Activated CD4-positive, alpha-beta T cell treated with anti-CD3 and anti-CD28 coated beads for 36 hours (primary cell): ENCODE measurements at regions of chr3 and their contacts with region 1.

Region 1: GRCh38 chr3:188788621-188789081 is 383.1 kb upstream of the TPRG1 start:
- DNase-seq: peak; percentile 89
- ATAC-seq: peak; percentile 97
- H3K4me3 Mint-ChIP-seq: no peak overlapping the region
- H3K27ac Mint-ChIP-seq: no peak overlapping the region
- H3K4me1 Mint-ChIP-seq: peaks cover 2% of the 10 kb centered on the region
- H3K27me3 Mint-ChIP-seq: no peaks in the 10 kb centered on the region

Region 2: GRCh38 chr3:187974871-187975271 is 813.8 kb before region 1 on chr3:
- CTCF ChIA-PET with region 1: no interaction called
- POLR2A ChIA-PET with region 1: no interaction called
- intact Hi-C with region 1: loop called (anchors 2 to 5 kb)
- DNase-seq: no peak
- ATAC-seq: peak; percentile 61
- H3K4me3 Mint-ChIP-seq: peak overlapping the region; percentile 57
- H3K27ac Mint-ChIP-seq: peak overlapping the region; percentile 90
- H3K4me1 Mint-ChIP-seq: peaks cover 57% of the 10 kb centered on the region
- H3K27me3 Mint-ChIP-seq: no peaks in the 10 kb centered on the region

Region 3: DNA sequence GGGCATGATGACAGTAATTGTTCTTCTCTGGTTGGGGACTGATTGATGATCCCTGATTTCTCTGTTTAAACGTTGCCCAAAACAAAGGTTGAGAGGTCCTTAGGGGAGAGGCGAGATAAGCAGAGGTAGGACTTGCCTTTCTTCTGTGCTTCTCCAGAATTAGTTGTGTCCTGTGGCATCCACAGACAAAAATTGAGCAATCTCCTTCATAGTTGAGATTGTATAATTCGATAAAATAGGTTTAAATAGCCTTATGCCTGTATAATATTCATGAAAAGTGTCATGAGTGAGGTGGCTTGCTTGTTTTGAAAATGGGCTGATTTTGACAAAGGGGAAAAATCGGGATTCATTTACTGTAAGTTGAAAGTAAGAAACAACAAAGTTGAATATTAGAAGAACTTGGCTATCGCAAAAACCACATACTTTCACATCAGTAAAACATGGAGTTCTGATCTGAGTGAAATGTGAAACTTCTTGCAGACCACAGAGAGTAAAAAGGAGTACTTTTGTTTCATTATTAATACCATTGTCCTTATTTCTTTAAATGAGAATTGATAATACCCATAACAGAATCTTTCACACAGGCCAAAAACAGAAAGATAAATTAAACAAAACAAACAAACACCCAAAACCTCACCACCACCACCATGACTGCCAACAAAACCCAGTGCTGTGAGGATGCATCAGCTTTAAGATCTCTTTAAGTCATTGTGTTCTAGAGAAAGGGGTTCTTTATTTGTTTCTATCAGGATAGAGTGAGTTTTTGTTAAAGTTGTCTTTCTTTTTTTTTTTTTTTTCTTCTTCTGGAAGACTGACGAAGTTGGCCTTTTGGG is 479.0 kb before region 1 on chr3:
- CTCF ChIA-PET with region 1: no interaction called
- POLR2A ChIA-PET with region 1: no interaction called
- intact Hi-C with region 1: loop called in 1 of 2 experiments (anchors 1 kb)
- DNase-seq: peak; percentile 50
- ATAC-seq: peak; percentile 85
- H3K4me3 Mint-ChIP-seq: peak overlapping the region; percentile 9
- H3K27ac Mint-ChIP-seq: peak overlapping the region; percentile 80
- H3K4me1 Mint-ChIP-seq: peaks cover 26% of the 10 kb centered on the region
- H3K27me3 Mint-ChIP-seq: no peaks in the 10 kb centered on the region

Region 4: DNA sequence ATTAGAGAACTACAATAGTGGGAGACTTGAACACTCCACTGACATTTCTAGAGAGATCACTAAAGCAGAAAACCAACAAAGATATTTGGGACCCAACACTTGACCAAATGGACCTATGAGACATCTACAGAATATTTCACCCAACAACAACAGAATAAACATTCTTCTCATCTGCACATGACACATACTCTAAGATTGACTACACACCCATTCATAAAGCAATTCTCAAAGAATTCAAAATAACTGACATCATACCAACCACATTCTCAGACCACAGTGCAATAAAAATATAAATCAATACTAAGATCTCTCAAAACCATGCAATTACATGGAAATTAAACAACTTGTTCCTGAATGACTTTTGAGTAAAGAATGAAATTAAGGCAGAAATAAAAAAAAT is 161.0 kb before region 1 on chr3:
- CTCF ChIA-PET with region 1: no interaction called
- POLR2A ChIA-PET with region 1: no interaction called
- intact Hi-C with region 1: loop called in 1 of 2 experiments (anchors 2 kb)
- DNase-seq: no peak
- ATAC-seq: peak; percentile 70
- H3K4me3 Mint-ChIP-seq: no peak overlapping the region
- H3K27ac Mint-ChIP-seq: no peak overlapping the region
- H3K4me1 Mint-ChIP-seq: peaks cover 15% of the 10 kb centered on the region
- H3K27me3 Mint-ChIP-seq: no peaks in the 10 kb centered on the region

Region 5: GRCh38 chr3:188830893-188831292 is 42.2 kb after region 1 on chr3:
- CTCF ChIA-PET with region 1: no interaction called
- POLR2A ChIA-PET with region 1: no interaction called
- intact Hi-C with region 1: loop called in 1 of 2 experiments (anchors 2 kb)
- DNase-seq: peak; percentile 13
- ATAC-seq: no peak
- H3K4me3 Mint-ChIP-seq: no peak overlapping the region
- H3K27ac Mint-ChIP-seq: no peak overlapping the region
- H3K4me1 Mint-ChIP-seq: peaks cover 26% of the 10 kb centered on the region
- H3K27me3 Mint-ChIP-seq: no peaks in the 10 kb centered on the region

Region 6: GRCh38 chr3:189530822-189531221 is 742.2 kb after region 1 on chr3:
- CTCF ChIA-PET with region 1: no interaction called
- POLR2A ChIA-PET with region 1: no interaction called
- intact Hi-C with region 1: loop called in 1 of 2 experiments (anchors 2 kb)
- DNase-seq: peak; percentile 30
- ATAC-seq: no peak
- H3K4me3 Mint-ChIP-seq: peak overlapping the region; percentile 38
- H3K27ac Mint-ChIP-seq: peak overlapping the region; percentile 82
- H3K4me1 Mint-ChIP-seq: peaks cover 35% of the 10 kb centered on the region
- H3K27me3 Mint-ChIP-seq: no peaks in the 10 kb centered on the region